Uterus (tissue), 4 donors: ENCODE measurements at regions of chr7 and their contacts with region 1.

Region 1: DNA sequence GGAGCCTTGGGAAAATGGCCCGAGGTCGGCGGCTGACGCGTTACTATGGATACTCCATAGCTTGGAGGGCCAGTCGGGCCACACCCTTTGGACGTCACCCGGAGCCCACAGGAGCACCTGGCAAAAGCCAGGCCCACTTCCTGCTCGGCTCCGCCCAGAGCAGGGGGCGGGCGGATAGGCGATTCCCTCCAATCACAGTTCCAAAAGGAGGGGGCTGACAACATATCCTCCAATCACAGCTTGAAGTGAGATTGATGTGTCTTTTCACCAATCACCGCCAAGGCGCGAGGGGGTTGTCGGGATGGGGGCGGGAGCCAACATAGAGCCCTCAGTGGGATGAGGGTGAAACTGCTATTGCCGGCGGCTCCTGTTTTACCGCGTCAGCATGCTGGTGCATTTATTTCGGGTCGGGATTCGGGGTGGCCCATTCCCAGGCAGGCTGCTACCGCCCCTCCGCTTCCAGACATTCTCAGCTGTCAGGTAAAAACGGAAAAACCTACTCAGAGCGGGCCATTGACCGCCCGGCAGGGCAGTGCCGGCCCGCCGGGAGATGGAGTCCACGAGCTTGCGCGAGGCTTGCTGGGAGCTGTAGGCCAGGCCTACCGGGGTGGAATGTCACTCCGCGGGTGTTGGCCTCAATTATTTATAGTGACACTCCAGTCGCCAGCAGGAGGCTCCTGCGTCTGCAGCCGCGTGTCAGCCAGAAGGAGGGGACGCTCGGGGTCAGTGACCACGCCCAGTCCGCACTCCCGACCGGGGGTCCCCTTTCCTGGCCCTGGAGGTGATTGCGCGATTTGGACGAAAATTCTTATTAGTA is at the start of gene ABCB8:
- DNase-seq: peak; percentile 98 to 100
- H3K4me3 ChIP-seq: peak within 1 kb of the TSS; percentile 69
- H3K27ac ChIP-seq: peak within 1 kb of the TSS; percentile 78 to 82
- H3K4me1 ChIP-seq: peaks cover 0 to 5% of the 10 kb centered on the region in 2 donors
- H3K27me3 ChIP-seq: no peaks in the 10 kb centered on the region
- CTCF ChIP-seq: peak; percentile 45 to 53 (median 46)
- POLR2A ChIP-seq: peak; percentile 31 to 59
- total RNA-seq, gene ABCB8: 18.7 to 54.3 (median 26.0) TPM

Region 2: DNA sequence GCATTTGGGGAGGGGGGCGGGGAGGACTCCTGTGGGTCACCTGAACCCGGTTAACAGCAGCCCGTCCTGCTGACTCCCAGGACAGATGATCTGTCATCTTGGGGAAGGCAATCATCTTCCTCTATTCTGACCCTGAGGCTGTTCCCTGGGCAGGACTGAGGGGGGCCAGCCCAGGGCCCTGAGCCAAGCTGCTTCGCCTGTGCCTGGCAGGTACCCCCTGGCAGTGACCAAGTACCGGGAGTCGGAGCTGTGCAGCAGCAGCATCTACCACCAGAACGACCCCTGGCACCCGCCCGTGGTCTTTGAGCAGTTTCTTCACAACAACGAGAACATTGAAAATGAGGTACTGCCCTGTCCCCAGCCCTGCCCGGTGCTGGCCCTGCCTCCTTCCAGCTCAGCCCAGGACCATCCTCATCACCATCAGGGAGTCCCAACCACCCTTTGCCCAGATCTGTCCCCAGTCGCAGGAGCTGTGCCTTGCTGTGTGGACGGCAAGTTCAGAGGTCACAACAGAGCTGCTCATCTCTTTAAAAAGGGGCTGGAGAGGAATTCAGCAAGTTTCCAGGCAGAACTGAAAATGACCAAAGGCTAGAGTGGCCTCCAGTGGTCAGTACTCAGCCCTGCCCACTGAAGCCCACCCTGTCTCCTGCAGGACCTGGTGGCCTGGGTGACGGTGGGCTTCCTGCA is 167.9 kb before region 1 on chr7:
- intact Hi-C with region 1: no loop called
- DNase-seq: no peak
- H3K4me3 ChIP-seq: no peak overlapping the region
- H3K27ac ChIP-seq: no peak overlapping the region
- H3K4me1 ChIP-seq: no peaks in the 10 kb centered on the region
- H3K27me3 ChIP-seq: no peaks in the 10 kb centered on the region
- CTCF ChIP-seq: no peak
- POLR2A ChIP-seq: no peak

Region 3: DNA sequence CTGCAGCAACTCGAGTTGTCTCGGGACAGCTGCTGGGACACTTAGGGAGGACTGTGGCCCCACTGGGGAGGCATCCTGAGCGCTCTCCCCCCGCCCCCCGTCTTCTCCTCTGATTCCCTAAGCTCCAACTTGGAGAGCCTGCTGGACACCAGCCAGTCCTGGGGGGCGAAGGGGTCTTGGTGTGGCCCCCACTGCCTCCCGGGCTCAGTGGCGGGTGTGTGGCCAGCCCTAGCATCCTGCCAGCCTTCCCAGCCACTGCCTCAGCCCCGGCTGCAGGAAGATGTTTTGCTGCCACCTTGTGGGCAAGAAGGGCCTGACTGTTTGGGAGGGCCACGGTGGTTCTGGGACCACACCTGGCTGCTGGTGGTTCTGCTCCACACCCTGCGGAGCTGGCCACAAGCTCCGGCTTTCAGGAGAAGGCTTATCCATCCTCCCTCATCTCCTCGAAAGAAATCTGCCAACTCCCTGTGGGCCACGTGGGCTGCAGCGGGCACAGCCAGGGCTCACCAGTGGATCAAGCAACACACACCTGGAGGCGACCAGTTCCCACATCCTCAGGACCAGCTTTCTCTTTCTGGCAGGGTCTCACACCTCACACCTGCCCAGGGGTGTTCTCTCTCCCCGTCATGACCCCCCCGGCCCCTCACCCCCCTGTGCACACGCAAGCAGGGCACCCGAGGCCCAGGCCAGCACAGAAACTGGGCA is 82.8 kb after region 1 on chr7:
- intact Hi-C with region 1: loop called (anchors 10 kb)
- DNase-seq: peak; percentile 80 to 81
- H3K4me3 ChIP-seq: no peak overlapping the region
- H3K27ac ChIP-seq: peak overlapping the region in 1 of 2 donors; percentile 76
- H3K4me1 ChIP-seq: peaks cover 0 to 29% of the 10 kb centered on the region in 2 donors
- H3K27me3 ChIP-seq: no peaks in the 10 kb centered on the region
- CTCF ChIP-seq: peak; percentile 91 to 96 (median 93)
- POLR2A ChIP-seq: no peak